ENCODE measurements at regions of chr16 and their contacts with region 1.

Region 1: GRCh38 chr16:69796351-69797118 is 34.4 kb downstream of the WWP2 start:
- DNase-seq: peak; percentile 61 to 80
- ATAC-seq: peak; percentile 94
- H3K4me3 ChIP-seq: no peak overlapping the region
- H3K27ac ChIP-seq: peak overlapping the region in 1 of 2 experiments; percentile 16; a peak in 2 of 6 replicates
- H3K4me1 ChIP-seq: no peaks in the 10 kb centered on the region
- CTCF ChIP-seq: peak; percentile 95
- EP300 ChIP-seq: no peak
- POLR2A ChIP-seq: no peak
- RAD21 ChIP-seq: peak; percentile 93 to 97

Region 2: DNA sequence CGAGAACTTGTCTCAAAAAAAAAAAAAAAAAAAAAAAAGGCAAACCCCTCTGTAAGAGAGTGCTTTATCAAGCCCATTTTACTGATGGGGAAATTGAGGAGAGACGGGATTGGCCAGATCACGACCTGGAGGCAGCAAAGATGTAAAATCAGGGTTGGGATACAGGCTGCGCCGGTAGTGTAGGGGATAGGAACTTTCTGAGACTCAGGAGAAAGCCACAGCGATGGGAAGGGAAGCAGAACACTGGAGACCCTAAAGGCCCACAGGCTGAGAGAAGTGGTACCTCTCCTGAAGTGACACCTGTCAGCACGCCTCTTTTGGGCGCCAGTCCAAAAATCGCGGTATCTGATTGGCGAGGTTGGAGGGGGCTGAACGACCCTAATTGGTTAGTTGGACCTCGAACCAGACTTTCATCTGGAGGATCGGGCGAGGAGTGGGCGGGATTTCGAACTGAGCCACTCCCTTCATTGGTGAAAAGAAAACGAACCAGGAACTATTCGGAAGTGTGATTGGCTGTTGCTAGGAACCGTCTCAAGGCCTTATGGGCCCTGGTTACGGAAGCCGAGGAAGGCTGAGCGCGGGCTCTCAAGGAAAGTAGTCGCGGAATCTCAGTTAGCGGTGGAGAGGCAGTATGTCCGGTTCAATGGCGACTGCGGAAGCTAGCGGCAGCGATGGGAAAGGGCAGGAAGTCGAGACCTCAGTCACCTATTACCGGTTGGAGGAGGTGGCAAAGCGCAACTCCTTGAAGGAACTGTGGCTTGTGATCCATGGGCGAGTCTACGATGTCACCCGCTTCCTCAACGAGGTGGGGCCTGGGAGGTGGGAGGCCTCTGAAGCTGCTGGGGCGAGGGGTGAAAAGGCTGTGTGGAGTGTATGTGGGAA is 372.2 kb before region 1 on chr16 and contains the start of gene CYB5B:
- CTCF ChIA-PET with region 1: no interaction called
- POLR2A ChIA-PET with region 1: no interaction called
- DNase-seq: peak; percentile 98 to 99
- ATAC-seq: peak; percentile 99
- H3K4me3 ChIP-seq: peak within 1 kb of the TSS; percentile 68
- H3K27ac ChIP-seq: peak within 1 kb of the TSS; percentile 81 to 90
- H3K4me1 ChIP-seq: peaks cover 24% of the 10 kb centered on the region
- CTCF ChIP-seq: no peak
- EP300 ChIP-seq: no peak
- POLR2A ChIP-seq: peak; percentile 82
- RAD21 ChIP-seq: peak in 1 of 2 experiments; percentile 33; a peak in 3 of 5 replicates
- polyA plus RNA-seq, gene CYB5B: 477 and 583 TPM in 2 replicates

Region 3: GRCh38 chr16:69720822-69721430 is 75.6 kb before region 1 on chr16:
- CTCF ChIA-PET with region 1: no interaction called
- POLR2A ChIA-PET with region 1: no interaction called
- DNase-seq: no peak
- ATAC-seq: no peak
- H3K4me3 ChIP-seq: 0 out of 3 replicates have a peak overlapping the region, but pooled peaks have one; percentile 14
- H3K27ac ChIP-seq: peak overlapping the region in 1 of 2 experiments; percentile 95; a peak in 3 of 6 replicates
- H3K4me1 ChIP-seq: peaks cover 45% of the 10 kb centered on the region
- CTCF ChIP-seq: no peak
- EP300 ChIP-seq: no peak
- POLR2A ChIP-seq: no peak
- RAD21 ChIP-seq: no peak

Region 4: DNA sequence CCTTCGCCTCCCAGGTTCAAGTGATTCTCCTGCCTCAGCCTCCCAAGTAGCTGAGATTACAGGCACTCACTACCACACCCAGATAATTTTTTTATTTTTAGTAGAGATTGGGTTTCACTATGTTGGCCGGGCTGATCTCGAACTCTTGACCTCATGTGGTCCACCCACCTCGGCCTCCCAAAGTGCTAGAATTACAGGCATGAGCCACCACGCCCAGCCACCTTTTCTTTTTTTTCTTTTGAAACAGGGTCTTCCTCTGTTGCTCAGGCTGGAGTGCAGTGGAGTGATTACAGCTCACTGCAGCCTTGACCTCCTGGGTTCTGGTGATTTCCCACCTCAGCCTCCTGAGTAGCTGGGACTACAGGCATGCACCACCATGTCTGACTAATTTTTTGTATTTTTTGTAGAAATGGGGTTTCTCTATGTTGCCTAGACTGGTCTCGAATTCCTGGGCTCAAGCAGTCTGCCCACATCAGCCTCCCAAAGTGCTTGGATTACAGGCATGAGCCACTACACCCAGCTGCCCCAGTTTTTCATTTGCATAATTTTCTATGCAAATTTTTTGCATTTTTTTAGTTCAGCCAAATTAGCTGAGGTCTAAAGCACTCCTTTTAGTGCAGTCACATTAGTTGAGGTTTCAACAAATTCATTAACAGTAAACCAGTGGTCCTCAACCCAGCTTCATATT is 23.1 kb before region 1 on chr16:
- CTCF ChIA-PET with region 1: interaction called, 10 read pairs
- POLR2A ChIA-PET with region 1: no interaction called
- DNase-seq: no peak
- ATAC-seq: no peak
- H3K4me3 ChIP-seq: no peak overlapping the region
- H3K27ac ChIP-seq: no peak overlapping the region
- H3K4me1 ChIP-seq: 0 out of 3 replicates have a peak, but pooled peaks cover 3% of the 10 kb centered on the region
- CTCF ChIP-seq: no peak
- EP300 ChIP-seq: no peak
- POLR2A ChIP-seq: no peak
- RAD21 ChIP-seq: no peak

Region 5: DNA sequence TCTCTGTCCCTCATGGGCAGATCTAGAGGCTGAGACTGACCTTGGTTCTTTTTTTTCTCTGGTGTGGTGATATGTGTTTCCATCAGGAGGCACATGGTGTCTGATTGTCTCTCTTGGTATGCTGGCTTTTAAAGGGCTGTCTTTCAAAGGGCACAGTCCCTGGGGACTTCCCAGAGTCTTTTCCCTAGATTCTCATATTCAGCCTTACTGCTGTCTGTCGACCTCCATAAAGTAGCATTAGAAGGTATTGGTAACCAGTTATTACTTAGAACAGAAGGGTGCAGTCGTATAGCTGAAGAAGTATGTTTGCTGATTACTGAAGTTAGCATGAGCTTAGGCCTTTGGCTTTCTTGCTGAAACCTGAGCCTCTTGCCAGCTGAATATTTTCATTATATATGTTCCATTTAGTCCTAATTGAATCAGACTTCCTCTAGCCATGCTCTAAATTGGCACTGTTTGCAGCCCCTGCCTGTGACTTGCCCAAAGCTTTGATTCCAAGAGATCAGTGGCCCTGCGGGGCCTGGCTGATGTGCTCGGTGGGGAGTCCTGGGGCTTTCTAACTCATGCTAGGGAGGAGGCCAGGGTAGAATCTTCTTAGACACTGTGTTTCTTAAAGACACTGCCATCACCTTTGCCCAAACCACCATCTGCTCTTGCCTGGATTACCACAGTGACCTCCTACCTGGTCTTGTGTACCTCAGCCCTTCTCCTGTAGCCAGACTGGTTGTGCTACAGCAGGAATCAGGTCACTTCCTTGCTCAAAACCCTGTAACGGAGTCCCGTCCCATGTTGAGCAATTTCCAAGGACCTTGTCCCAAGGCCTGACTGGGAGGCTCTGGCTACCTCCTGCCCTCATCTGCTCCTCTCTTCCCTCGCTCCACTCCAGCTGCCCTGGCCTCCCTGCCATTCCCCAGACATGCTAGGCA is 37.1 kb after region 1 on chr16:
- CTCF ChIA-PET with region 1: interaction called, 15 read pairs
- POLR2A ChIA-PET with region 1: no interaction called
- DNase-seq: no peak
- ATAC-seq: no peak
- H3K4me3 ChIP-seq: no peak overlapping the region
- H3K27ac ChIP-seq: peak overlapping the region; percentile 6 to 89; a peak in 5 of 6 replicates
- H3K4me1 ChIP-seq: peaks cover 39% of the 10 kb centered on the region
- CTCF ChIP-seq: no peak
- EP300 ChIP-seq: no peak
- POLR2A ChIP-seq: no peak
- RAD21 ChIP-seq: no peak

Region 6: DNA sequence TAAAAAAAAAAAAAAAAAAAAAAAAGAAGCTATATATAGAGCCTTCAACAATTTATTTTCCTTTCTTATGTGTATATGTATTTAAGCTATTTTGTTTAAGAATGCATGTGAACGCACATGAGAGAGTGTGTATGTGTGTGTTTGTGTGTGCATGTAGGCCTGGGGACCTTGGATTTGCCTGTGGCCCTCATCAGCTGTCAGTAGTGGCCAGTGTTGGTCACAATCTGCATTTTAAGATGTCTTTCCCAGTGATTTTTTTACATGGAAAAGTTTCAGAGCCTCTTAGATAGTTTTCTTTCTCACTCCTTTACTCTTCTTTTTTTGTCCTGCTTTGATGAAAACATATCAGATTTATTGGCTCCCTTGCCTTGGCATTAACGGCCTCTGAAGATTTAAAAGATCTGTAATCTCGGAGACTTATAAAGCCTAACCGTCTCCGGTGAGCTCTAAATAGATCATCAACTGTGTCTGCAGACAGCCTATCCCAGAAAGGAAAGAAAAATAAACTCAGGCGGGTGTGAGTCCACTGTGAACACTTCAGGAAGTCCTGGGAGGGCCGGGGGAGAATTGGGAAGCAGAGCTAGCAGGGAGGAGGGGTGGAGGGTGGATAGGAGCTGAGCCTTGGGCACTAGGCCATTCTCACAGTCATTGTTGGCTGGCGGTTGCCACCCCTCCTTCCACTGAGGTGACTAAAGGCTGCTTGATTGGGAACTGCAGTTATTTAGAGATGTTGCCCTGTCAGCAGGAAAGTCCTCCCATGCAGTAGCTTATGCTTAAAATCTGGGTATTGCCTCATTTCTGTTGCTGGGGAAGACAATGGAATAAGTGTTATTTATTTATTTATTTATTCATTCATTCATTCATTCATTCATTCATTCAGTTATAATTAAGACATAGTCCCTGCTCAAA is 52.4 kb after region 1 on chr16:
- CTCF ChIA-PET with region 1: interaction called, 13 read pairs
- POLR2A ChIA-PET with region 1: no interaction called
- DNase-seq: no peak
- ATAC-seq: no peak
- H3K4me3 ChIP-seq: no peak overlapping the region
- H3K27ac ChIP-seq: no peak overlapping the region
- H3K4me1 ChIP-seq: no peaks in the 10 kb centered on the region
- CTCF ChIP-seq: no peak
- EP300 ChIP-seq: no peak
- POLR2A ChIP-seq: no peak
- RAD21 ChIP-seq: no peak

Region 7: GRCh38 chr16:69917739-69918138 is 121.2 kb after region 1 on chr16:
- CTCF ChIA-PET with region 1: interaction called, 13 read pairs
- POLR2A ChIA-PET with region 1: no interaction called
- DNase-seq: peak; percentile 71 to 87
- ATAC-seq: peak; percentile 96 to 98
- H3K4me3 ChIP-seq: peak overlapping the region; percentile 1; the same call in 1 of the 3 replicates
- H3K27ac ChIP-seq: peak overlapping the region; percentile 59 to 84
- H3K4me1 ChIP-seq: peaks cover 21% of the 10 kb centered on the region
- CTCF ChIP-seq: no peak
- EP300 ChIP-seq: peak in 1 of 2 experiments; percentile 60; a peak in 1 of 5 replicates
- POLR2A ChIP-seq: no peak
- RAD21 ChIP-seq: peak in 1 of 2 experiments; percentile 22; a peak in 1 of 5 replicates

Measured in A549 (cell line).